K562 (cell line): ENCODE measurements at regions of chr4 and their contacts with region 1.

Region 1: DNA sequence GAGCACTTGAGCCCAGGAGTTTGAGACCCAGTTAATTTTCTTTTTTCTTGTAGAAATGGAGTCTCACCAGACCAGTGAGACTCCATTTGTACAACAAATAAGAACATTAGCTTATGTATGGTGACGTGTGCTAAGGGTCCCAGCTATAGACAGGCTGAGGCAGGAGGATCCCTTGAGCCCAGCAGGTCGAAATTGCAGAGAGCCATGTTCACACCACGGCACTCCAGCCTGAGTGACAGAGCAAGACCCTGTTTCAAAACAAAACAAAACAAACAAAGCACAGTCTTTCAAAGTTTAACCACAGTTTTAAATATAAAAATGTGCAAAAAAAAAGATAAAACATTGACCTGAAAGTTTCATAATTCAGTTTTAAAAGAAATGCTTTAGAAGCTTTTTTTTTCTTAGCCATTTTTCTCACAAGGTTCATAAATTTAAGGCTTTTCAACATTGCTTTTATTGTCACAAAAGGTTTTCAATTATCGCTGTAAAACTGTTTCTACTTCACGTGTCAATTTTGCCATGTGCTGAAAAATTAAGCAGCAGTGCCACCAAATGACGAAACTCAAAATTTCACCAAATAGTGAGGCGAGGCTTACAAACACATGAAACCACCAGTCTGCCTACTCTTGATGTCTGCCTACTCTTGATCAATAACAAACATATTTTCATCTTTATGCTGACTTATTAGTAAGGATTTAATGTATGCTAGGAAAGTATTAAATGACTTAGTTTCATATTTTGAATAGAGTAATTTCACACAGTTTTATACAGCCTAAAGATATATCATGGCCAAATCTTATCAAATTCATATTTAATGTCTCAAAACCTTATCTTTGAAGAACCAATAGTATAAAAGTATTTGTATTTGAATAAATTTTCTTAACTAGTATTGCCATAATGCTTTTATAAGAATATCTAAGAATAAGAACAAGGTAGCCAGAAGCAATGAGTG is 126.3 kb downstream of the NEK1 start:
- DNase-seq: peak in 2 of 4 experiments; percentile 14 to 45
- ATAC-seq: peak; percentile 80
- H3K4me3 ChIP-seq: no peak overlapping the region
- H3K27ac ChIP-seq: no peak overlapping the region
- H3K4me1 ChIP-seq: no peaks in the 10 kb centered on the region
- H3K27me3 ChIP-seq: no peaks in the 10 kb centered on the region
- CTCF ChIP-seq: peak; percentile 36 to 68 (median 44); a peak in 3 of 6 replicates
- EP300 ChIP-seq: no peak
- POLR2A ChIP-seq: no peak
- RAD21 ChIP-seq: peak; percentile 68 to 73

Region 2: DNA sequence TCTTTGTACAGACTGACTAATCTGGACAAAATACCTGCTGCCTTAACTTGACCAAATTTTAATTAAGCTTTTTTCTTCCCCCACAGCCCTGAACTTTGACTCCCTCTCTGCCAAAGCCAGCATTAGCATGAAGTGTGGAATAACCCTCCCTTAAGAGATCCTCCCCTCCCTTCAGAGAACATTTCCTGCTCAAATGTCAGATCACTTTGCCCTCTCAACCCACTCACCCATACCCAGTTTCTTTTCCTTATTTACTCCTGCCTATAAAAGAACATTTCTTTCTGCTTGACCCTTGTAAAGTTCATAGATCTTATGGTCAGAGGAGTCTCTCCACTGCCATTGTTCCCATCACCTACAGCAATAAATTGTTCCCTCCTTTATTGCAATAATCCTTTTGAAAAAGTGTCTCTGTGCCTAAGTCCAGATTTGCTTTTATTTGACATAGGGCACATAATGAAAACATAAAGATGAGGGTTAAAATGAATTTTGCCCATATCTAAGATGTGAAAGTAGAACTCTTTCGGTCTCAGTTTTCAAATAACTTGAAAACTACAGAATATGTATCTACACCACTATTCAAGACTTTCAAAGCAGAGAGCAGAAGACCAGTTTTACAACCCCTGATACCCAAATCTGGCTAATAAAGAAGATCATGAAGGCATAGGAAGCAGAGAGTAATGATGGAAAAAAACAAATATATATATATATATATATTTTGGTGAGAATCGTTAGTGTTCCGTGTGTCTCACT is 1683.4 kb before region 1 on chr4:
- CTCF ChIA-PET with region 1: no interaction called
- POLR2A ChIA-PET with region 1: no interaction called
- in situ Hi-C with region 1: no loop called
- intact Hi-C with region 1: no loop called
- DNase-seq: no peak
- ATAC-seq: no peak
- H3K4me3 ChIP-seq: no peak overlapping the region
- H3K27ac ChIP-seq: no peak overlapping the region
- H3K4me1 ChIP-seq: no peaks in the 10 kb centered on the region
- H3K27me3 ChIP-seq: no peaks in the 10 kb centered on the region
- CTCF ChIP-seq: no peak
- EP300 ChIP-seq: no peak
- POLR2A ChIP-seq: no peak
- RAD21 ChIP-seq: no peak

Region 3: DNA sequence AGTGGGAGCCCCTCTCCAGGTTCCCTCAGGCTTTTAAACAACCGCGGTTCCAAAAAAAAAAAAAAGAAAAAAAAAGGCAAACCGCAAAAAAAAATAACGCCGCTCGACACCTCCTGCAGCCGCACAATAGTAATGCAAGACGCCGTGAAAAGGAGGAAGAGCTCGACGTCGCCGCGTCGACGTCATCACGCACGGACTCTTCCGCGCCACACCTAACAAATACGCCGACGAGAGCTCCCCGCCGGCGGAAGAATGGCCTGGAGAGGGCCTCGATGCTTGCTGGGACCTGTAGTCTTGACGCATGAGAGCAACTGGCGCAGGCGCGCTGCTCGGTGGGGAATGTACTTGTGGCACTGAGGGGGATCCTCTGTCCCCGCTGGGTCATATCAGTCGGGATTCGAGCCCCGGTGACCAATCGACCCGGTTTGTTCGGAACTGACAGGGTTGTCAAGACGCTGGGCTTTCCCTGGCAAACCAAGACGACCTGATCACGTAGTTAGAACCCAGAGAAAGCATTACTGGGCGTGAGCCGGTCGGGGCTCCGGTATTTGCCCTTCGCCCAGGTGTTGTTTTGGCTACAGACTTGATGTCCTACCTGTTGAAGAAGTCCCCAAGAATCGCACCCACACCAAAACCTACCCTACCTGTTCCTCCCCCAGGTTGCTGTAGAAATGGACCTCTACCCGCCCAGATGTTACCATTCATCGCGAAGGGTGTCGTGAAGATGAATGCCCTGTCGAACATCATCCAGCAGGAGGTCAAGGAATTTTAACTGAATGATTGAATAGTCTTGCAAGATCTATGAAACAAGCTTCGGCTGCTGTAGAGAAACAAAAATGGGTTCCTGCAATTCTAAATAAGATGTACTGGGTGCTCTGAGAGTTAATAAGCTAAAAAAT is 475.7 kb before region 1 on chr4 and contains the start of gene CBR4:
- CTCF ChIA-PET with region 1: no interaction called
- POLR2A ChIA-PET with region 1: no interaction called
- in situ Hi-C with region 1: loop called (anchors 25 kb)
- intact Hi-C with region 1: no loop called
- DNase-seq: peak; percentile 83 to 99 (median 86)
- ATAC-seq: peak; percentile 94
- H3K4me3 ChIP-seq: peak within 1 kb of the TSS; percentile 63
- H3K27ac ChIP-seq: peak within 1 kb of the TSS; percentile 95
- H3K4me1 ChIP-seq: peaks cover 7 to 36% of the 10 kb centered on the region in 2 experiments; a peak in 4 of 5 replicates
- H3K27me3 ChIP-seq: no peaks in the 10 kb centered on the region
- CTCF ChIP-seq: peak in 2 of 3 experiments; percentile 38 to 39; a peak in 3 of 6 replicates
- EP300 ChIP-seq: 0 out of 2 replicates have a peak, but pooled peaks have one; percentile 16
- POLR2A ChIP-seq: peak; percentile 94
- RAD21 ChIP-seq: no peak
- polyA plus RNA-seq, gene CBR4: 26.0 to 26.4 TPM

Region 4: GRCh38 chr4:169270810-169271691 is 215.0 kb before region 1 on chr4 and contains the start of gene SH3RF1:
- CTCF ChIA-PET with region 1: no interaction called
- POLR2A ChIA-PET with region 1: no interaction called
- in situ Hi-C with region 1: no loop called
- intact Hi-C with region 1: loop called (anchors 10 kb)
- DNase-seq: peak; percentile 46 to 53 (median 51)
- ATAC-seq: peak; percentile 89
- H3K4me3 ChIP-seq: peak within 1 kb of the TSS; percentile 30
- H3K27ac ChIP-seq: no peak within 1 kb of the TSS
- H3K4me1 ChIP-seq: peaks cover 0 to 18% of the 10 kb centered on the region in 2 experiments; a peak in 2 of 5 replicates
- H3K27me3 ChIP-seq: peaks cover 19 to 29% of the 10 kb centered on the region in 2 experiments; a peak in 4 of 5 replicates
- CTCF ChIP-seq: peak in 2 of 3 experiments; percentile 2 to 8; a peak in 1 of 6 replicates
- EP300 ChIP-seq: no peak
- POLR2A ChIP-seq: no peak
- RAD21 ChIP-seq: no peak
- polyA plus RNA-seq, gene SH3RF1: not detected

Region 5: GRCh38 chr4:169369634-169370033 is 116.4 kb before region 1 on chr4:
- CTCF ChIA-PET with region 1: no interaction called
- POLR2A ChIA-PET with region 1: no interaction called
- in situ Hi-C with region 1: no loop called
- intact Hi-C with region 1: loop called (anchors 5 kb)
- DNase-seq: peak in 1 of 4 experiments; percentile 36
- ATAC-seq: peak; percentile 91
- H3K4me3 ChIP-seq: no peak overlapping the region
- H3K27ac ChIP-seq: no peak overlapping the region
- H3K4me1 ChIP-seq: no peaks in the 10 kb centered on the region
- H3K27me3 ChIP-seq: no peaks in the 10 kb centered on the region
- CTCF ChIP-seq: peak in 2 of 3 experiments; percentile 33 to 49; a peak in 3 of 6 replicates
- EP300 ChIP-seq: no peak
- POLR2A ChIP-seq: no peak
- RAD21 ChIP-seq: peak; percentile 17 to 54; a peak in 3 of 4 replicates

Region 6: GRCh38 chr4:169634975-169635374 is 148.9 kb after region 1 on chr4:
- CTCF ChIA-PET with region 1: no interaction called
- POLR2A ChIA-PET with region 1: no interaction called
- in situ Hi-C with region 1: no loop called
- intact Hi-C with region 1: no loop called
- DNase-seq: no peak
- ATAC-seq: peak; percentile 69
- H3K4me3 ChIP-seq: no peak overlapping the region
- H3K27ac ChIP-seq: peak overlapping the region; percentile 33; the same call in 1 of the 3 replicates
- H3K4me1 ChIP-seq: peaks cover 0 to 4% of the 10 kb centered on the region in 2 experiments; a peak in 2 of 5 replicates
- H3K27me3 ChIP-seq: no peaks in the 10 kb centered on the region
- CTCF ChIP-seq: no peak
- EP300 ChIP-seq: no peak
- POLR2A ChIP-seq: no peak
- RAD21 ChIP-seq: no peak